ENCODE measurements at regions of chr2 and their contacts with region 1.

Region 1: DNA sequence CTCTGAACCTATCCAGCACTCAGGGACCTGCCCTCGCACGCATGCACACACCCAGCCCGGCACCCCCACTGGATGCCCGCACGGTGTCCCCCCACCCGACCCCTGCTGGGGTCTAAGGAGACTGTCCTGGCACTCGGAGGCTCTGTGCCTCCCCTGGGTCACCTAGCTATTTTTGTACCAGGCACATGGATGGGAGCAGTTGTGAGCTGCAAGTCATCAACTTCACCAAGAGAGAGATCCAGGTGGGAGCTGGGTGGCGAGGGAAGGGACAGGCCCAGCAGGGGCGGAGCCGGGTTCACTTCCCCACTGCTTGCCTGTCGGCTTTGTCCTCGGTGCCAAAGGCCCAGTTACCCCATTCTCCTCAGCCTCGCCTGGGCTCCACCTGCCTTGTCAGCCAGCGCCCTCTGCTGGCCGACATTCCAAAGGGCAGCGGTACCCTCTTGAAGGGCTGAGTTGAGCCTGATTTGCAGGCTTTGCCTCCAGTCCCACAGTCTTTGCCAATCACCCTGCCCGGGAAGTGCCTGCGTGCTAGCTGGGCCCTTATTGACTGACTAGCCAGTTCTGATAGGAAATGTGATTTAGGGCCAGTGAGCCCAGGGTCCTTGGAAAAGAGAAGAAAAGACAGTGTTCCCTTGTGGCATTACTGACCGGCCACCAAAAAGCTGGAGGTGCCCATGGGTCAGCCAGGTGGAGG is 5.8 kb downstream of the NT5DC4 start:
- H3K4me3 ChIP-seq: no peak overlapping the region
- H3K27ac ChIP-seq: no peak overlapping the region
- H3K4me1 ChIP-seq: no peaks in the 10 kb centered on the region
- CTCF ChIP-seq: peak; percentile 98

Region 2: GRCh38 chr2:112626604-112627059 is 100.0 kb before region 1 on chr2:
- CTCF ChIA-PET with region 1: interaction called, 204 read pairs
- POLR2A ChIA-PET with region 1: interaction called, 3 read pairs
- H3K4me3 ChIP-seq: no peak overlapping the region
- H3K27ac ChIP-seq: no peak overlapping the region
- H3K4me1 ChIP-seq: peaks cover 8% of the 10 kb centered on the region
- CTCF ChIP-seq: peak; percentile 91

Region 3: DNA sequence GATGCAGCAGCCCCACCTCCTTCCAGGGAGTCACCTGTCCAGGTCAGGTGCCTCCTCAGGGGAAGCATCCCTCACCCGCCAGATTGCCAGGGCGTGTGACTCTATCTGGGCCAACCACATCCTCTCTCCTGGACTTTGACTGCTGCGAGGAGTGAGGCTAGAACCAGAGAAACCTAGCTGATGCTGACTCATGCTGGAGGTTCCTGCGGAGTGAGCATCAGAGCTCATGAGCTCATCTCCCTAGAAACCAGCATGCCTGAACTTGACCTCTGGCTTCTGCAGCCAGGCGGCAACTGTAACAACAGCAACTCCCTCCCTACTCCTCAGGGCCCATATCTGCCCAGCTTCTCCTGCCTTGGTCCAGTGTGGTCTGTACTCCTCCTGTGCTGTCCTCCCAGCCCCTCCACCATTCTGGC is 34.1 kb before region 1 on chr2:
- CTCF ChIA-PET with region 1: interaction called, 21 read pairs
- POLR2A ChIA-PET with region 1: no interaction called
- H3K4me3 ChIP-seq: no peak overlapping the region
- H3K27ac ChIP-seq: no peak overlapping the region
- H3K4me1 ChIP-seq: no peaks in the 10 kb centered on the region
- CTCF ChIP-seq: no peak

Region 4: DNA sequence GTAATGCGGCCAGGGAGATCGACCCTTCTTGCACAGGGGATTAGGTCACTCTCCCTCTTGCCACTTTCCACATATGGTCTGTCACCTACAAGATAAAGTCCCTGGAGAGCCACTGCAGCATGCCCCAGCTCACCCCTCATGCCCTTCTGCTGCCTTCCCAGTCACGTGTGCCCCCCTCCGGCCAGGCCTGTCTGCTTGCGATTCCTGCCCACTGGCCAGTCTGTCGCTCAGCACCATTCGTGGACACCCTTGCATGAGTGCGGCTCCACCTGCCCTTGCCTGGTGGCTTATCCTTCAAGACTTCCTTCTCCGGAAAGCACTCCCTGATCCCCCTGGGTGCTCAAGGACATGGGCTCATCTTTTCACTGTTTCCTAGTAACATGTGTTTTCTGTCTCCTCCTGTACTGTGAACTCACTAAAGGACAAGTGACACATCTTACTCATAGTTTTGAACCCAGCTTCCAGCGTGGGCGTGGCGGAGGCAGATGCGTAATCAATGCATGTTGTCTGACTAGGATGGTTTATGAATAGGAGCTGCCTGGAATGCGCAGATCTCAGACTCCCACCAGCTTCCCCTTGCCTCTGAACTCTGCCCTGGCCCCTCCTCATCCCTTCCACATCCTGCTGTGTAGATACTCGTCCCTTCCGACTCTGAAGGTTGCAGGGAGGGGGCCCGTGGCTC is 13.6 kb before region 1 on chr2:
- CTCF ChIA-PET with region 1: interaction called, 58 read pairs
- POLR2A ChIA-PET with region 1: interaction called, 3 read pairs
- H3K4me3 ChIP-seq: no peak overlapping the region
- H3K27ac ChIP-seq: no peak overlapping the region
- H3K4me1 ChIP-seq: no peaks in the 10 kb centered on the region
- CTCF ChIP-seq: no peak

Region 5: DNA sequence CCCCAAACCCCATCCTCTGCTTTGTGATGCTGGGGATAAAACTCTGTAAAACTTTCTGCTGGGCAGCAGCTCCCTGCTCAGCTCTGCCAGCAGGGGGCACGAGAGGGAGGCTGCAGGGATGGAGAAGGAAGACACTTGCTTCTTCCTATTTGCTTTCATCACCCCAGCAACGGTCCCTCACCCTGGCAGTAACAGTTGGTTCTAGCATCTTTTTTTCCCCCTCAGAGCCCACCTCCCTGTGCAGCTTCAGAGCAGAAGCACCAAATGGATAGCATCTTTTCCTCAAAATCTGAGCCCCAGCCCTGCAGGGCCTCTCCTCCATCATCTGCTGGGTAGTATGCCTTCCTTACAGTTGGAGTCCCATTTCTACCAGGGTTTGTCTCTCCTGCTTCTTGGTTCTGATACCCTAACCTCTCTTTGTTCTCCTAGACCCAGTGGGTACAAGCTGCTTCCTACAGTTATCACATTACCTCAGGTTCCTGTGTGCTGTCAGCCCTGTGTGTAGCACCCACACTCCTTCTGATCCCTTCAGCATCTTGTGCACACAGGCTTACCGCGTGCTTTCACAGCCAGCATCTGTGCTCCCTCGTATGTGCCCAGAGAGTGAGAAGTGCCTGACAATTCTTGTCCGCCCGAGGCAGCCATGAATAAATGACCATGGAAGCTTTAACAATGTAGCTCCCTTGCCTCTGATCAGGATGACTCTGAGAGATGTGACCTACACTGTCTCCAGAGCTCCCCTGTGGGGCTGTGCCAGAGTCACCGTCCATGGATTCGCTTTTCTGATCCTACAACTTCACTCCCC is 23.3 kb after region 1 on chr2:
- CTCF ChIA-PET with region 1: interaction called, 11 read pairs
- POLR2A ChIA-PET with region 1: no interaction called
- H3K4me3 ChIP-seq: no peak overlapping the region
- H3K27ac ChIP-seq: no peak overlapping the region
- H3K4me1 ChIP-seq: peaks cover 16% of the 10 kb centered on the region
- CTCF ChIP-seq: peak; percentile 73

Region 6: DNA sequence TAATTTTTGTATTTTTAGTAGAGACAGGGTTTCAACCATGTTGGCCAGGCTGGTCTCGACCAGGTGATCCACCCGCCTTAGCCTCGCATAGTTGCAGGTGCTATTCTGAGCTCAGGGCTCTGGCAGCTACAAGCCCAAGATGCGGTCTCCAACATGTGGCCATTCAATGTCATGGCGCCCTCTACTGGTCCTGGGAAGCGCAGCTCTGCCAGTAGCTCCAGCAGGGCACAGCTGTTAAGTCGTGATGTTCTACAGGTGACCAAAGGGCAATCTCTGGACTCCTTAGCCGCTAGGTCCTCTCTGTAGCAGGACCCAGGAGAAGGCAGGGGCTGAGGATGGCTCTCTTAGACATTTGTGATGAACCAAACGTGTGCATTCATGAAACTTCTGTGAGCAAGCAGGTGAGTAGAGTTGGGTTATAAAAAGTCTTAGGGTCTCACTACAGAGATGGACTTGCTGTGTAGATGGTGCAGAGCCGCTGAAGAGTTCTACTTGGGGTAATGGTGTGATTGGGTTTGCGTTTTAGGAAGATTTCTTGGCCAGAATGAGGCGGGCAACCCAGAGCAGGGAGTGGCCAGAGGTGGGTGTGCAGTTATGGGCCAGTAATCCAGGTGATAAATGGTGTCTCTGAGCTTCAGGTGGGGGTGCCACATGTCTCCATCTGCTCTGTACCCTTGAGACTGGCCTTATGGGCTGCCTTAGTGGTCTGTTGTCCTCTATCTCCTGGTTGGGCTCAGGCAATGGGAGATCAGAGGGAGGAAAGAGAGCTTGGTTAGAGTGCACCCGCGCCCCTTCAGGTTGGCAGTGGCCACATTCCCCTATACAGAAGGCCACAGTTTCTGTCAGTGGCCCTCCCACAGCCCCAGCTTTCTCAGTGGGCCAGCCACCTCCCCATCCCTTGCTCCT is 215.4 kb after region 1 on chr2:
- CTCF ChIA-PET with region 1: interaction called, 38 read pairs
- POLR2A ChIA-PET with region 1: no interaction called
- H3K4me3 ChIP-seq: no peak overlapping the region
- H3K27ac ChIP-seq: no peak overlapping the region
- H3K4me1 ChIP-seq: no peaks in the 10 kb centered on the region
- CTCF ChIP-seq: peak; percentile 71